ENCODE measurements at regions of chr6 and their contacts with region 1.

Region 1: DNA sequence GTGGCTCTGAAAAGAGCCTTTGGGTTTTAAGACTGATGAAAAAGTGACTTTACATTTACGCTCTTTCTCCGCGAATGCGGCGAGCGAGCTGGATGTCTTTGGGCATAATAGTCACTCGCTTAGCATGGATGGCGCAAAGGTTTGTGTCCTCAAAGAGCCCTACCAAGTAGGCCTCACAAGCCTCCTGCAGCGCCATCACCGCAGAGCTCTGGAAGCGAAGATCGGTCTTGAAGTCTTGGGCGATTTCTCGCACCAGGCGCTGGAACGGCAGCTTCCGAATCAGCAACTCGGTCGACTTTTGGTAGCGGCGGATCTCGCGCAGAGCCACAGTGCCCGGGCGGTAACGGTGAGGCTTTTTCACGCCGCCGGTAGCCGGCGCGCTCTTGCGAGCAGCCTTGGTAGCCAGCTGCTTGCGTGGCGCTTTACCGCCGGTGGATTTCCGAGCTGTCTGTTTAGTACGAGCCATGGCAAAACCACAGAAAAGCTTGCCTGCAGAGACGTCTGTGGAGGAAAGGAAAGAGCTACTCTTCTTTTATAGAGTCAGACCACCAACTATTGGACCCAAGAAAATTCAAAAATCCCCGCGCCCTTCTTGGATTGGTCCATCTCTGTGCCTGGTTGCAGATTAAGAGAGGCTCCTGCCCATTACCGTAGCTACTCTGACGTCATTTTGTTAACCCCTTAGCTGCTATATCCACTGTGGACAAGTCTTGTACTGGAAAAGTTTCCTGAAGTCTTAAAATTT is 55.5 kb upstream of the HFE start:
- DNase-seq: peak; percentile 92
- H3K4me3 ChIP-seq: peak overlapping the region; percentile 1 to 59 (median 54)
- H3K27ac ChIP-seq: peak overlapping the region; percentile 90 to 94 (median 92)
- H3K4me1 ChIP-seq: peaks cover 0 to 29% (median 25%) of the 10 kb centered on the region in 4 donors
- H3K27me3 ChIP-seq: no peaks in the 10 kb centered on the region
- CTCF ChIP-seq: peak in 1 of 4 experiments; percentile 22
- EP300 ChIP-seq: no peak
- POLR2A ChIP-seq: no peak

Region 2: GRCh38 chr6:26045065-26045927 is 13.5 kb after region 1 on chr6:
- intact Hi-C with region 1: loop called (anchors 1 kb)
- DNase-seq: peak; percentile 94
- H3K4me3 ChIP-seq: peak overlapping the region; percentile 41 to 56 (median 54)
- H3K27ac ChIP-seq: peak overlapping the region; percentile 94 to 98 (median 98)
- H3K4me1 ChIP-seq: peaks cover 0 to 20% (median 15%) of the 10 kb centered on the region in 4 donors
- H3K27me3 ChIP-seq: no peaks in the 10 kb centered on the region
- CTCF ChIP-seq: no peak
- EP300 ChIP-seq: no peak
- POLR2A ChIP-seq: peak; percentile 91 to 93